MCF 10A (cell line): ENCODE measurements at regions of chr6 and their contacts with region 1.

Region 1: DNA sequence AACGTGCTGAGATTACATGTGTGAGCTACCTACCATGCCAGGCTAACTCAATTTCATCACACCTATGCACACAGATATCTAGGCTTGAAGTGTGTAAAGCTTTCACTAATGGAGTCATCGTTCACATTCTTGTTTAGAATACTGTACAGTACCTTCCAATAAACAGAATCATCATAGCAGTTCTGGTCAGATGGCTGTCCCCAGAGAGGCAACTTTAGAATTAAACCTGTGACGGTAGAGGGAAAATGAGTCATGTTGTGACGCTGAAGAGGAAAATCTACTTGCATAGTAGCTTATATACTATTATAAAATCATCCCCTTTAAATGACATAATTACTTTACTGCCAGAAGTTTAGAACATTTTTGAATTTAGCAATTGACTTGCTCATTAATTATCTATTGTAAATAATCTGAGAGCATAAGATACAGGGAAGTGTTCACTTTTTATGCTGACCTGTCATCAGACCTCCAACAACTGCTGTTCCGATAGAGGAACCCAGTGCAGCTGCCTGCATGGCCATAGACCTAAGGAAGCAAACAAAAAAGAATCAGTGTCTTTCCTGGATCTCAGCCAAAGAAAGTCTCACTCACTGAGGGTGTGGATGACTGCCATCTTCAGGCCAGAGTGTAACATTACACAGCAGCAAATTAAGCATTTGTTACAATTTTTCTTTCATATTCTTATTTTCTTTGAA is 29.8 kb downstream of the RHAG start:
- DNase-seq: peak; percentile 95
- H3K4me3 Mint-ChIP-seq: no peak overlapping the region
- H3K27ac Mint-ChIP-seq: no peak overlapping the region
- H3K4me1 Mint-ChIP-seq: no peaks in the 10 kb centered on the region
- H3K27me3 Mint-ChIP-seq: no peaks in the 10 kb centered on the region
- CTCF ChIP-seq: peak; percentile 89

Region 2: GRCh38 chr6:49453221-49453620 is 153.6 kb before region 1 on chr6:
- CTCF ChIA-PET with region 1: interaction called, 8 read pairs
- POLR2A ChIA-PET with region 1: interaction called, 3 read pairs
- intact Hi-C with region 1: loop called (anchors 2 kb)
- DNase-seq: peak; percentile 12
- H3K4me3 Mint-ChIP-seq: no peak overlapping the region
- H3K27ac Mint-ChIP-seq: no peak overlapping the region
- H3K4me1 Mint-ChIP-seq: no peaks in the 10 kb centered on the region
- H3K27me3 Mint-ChIP-seq: no peaks in the 10 kb centered on the region
- CTCF ChIP-seq: peak; percentile 33

Region 3: GRCh38 chr6:49531774-49532569 is 74.9 kb before region 1 on chr6:
- CTCF ChIA-PET with region 1: interaction called, 182 read pairs
- POLR2A ChIA-PET with region 1: interaction called, 6 read pairs
- intact Hi-C with region 1: loop called (anchors 1 kb)
- DNase-seq: peak; percentile 72
- H3K4me3 Mint-ChIP-seq: peak overlapping the region; percentile 31
- H3K27ac Mint-ChIP-seq: no peak overlapping the region
- H3K4me1 Mint-ChIP-seq: peaks cover 6% of the 10 kb centered on the region
- H3K27me3 Mint-ChIP-seq: no peaks in the 10 kb centered on the region
- CTCF ChIP-seq: peak; percentile 90

Region 4: GRCh38 chr6:49550492-49551077 is 56.3 kb before region 1 on chr6 and contains the start of gene C6orf141:
- CTCF ChIA-PET with region 1: interaction called, 13 read pairs
- POLR2A ChIA-PET with region 1: interaction called, 5 read pairs
- intact Hi-C with region 1: no loop called
- DNase-seq: peak; percentile 82
- H3K4me3 Mint-ChIP-seq: peak within 1 kb of the TSS; percentile 90
- H3K27ac Mint-ChIP-seq: peak within 1 kb of the TSS; percentile 77
- H3K4me1 Mint-ChIP-seq: peaks cover 25% of the 10 kb centered on the region
- H3K27me3 Mint-ChIP-seq: no peaks in the 10 kb centered on the region
- CTCF ChIP-seq: no peak
- total RNA-seq, gene C6orf141: 29.9 and 37.0 TPM in 2 replicates

Region 5: DNA sequence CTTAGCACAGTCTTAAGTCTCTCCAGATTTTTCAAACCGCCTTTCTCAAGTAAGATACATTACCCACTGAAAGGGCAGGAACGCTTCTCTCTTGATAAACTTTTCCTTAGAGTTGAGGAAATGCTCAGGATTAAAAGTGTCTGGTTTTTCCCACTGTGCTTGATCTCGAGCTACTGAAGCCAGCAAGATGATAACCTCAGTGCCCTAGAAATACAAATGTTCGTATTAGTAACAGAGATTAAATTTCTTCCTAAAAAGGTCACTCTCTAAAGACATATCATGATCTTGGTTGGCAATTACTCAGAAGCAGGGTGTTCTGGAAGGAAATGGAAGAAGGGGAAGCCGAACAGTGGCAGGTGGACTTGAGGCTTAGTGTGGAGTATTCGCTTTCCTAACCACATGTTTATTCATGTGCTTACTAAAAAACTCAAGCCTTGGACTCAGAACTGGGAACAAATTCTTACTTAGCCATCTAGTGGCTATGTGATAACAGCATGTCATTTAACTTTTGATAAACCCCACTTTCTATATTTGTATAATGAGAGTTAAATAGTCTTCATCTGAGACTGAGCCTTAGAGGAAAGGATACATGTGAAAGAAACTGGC is 36.3 kb before region 1 on chr6:
- CTCF ChIA-PET with region 1: interaction called, 13 read pairs
- POLR2A ChIA-PET with region 1: no interaction called
- intact Hi-C with region 1: no loop called
- DNase-seq: peak; percentile 30
- H3K4me3 Mint-ChIP-seq: no peak overlapping the region
- H3K27ac Mint-ChIP-seq: no peak overlapping the region
- H3K4me1 Mint-ChIP-seq: peaks cover 10% of the 10 kb centered on the region
- H3K27me3 Mint-ChIP-seq: no peaks in the 10 kb centered on the region
- CTCF ChIP-seq: peak; percentile 15

Region 6: DNA sequence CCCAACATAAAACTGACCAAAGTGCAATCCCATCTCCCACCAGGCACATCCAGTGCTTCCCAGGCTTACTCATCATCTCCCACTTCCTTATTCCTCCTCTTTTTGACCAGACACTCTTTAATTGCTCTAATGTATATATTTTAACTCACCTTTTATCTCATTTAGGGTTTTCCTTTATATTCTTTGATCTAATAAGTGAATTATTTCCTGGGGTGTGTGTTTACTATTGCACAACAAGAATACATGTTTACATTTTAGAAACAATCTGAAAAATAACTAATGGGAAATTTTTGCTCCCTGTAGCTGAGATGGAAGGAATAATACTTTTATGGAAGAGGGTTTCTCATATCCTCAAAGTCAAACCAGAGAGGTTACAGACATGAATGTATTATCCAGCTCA is 11.4 kb after region 1 on chr6:
- CTCF ChIA-PET with region 1: interaction called, 32 read pairs
- POLR2A ChIA-PET with region 1: no interaction called
- intact Hi-C with region 1: no loop called
- DNase-seq: no peak
- H3K4me3 Mint-ChIP-seq: no peak overlapping the region
- H3K27ac Mint-ChIP-seq: no peak overlapping the region
- H3K4me1 Mint-ChIP-seq: no peaks in the 10 kb centered on the region
- H3K27me3 Mint-ChIP-seq: peaks cover 28% of the 10 kb centered on the region
- CTCF ChIP-seq: no peak

Region 7: GRCh38 chr6:49646130-49646824 is 39.4 kb after region 1 on chr6:
- CTCF ChIA-PET with region 1: no interaction called
- POLR2A ChIA-PET with region 1: no interaction called
- intact Hi-C with region 1: no loop called
- DNase-seq: no peak
- H3K4me3 Mint-ChIP-seq: no peak overlapping the region
- H3K27ac Mint-ChIP-seq: no peak overlapping the region
- H3K4me1 Mint-ChIP-seq: no peaks in the 10 kb centered on the region
- H3K27me3 Mint-ChIP-seq: peaks cover 81% of the 10 kb centered on the region
- CTCF ChIP-seq: no peak

Region 8: GRCh38 chr6:49813248-49813647 is 206.4 kb after region 1 on chr6:
- CTCF ChIA-PET with region 1: no interaction called
- POLR2A ChIA-PET with region 1: no interaction called
- intact Hi-C with region 1: no loop called
- DNase-seq: no peak
- H3K4me3 Mint-ChIP-seq: no peak overlapping the region
- H3K27ac Mint-ChIP-seq: no peak overlapping the region
- H3K4me1 Mint-ChIP-seq: no peaks in the 10 kb centered on the region
- H3K27me3 Mint-ChIP-seq: no peaks in the 10 kb centered on the region
- CTCF ChIP-seq: no peak

Region 9: GRCh38 chr6:49849213-49849907 is 242.5 kb after region 1 on chr6:
- CTCF ChIA-PET with region 1: interaction called, 10 read pairs
- POLR2A ChIA-PET with region 1: no interaction called
- intact Hi-C with region 1: no loop called
- DNase-seq: peak; percentile 55
- H3K4me3 Mint-ChIP-seq: no peak overlapping the region
- H3K27ac Mint-ChIP-seq: no peak overlapping the region
- H3K4me1 Mint-ChIP-seq: no peaks in the 10 kb centered on the region
- H3K27me3 Mint-ChIP-seq: peaks cover 35% of the 10 kb centered on the region
- CTCF ChIP-seq: peak; percentile 54